ENCODE measurements at regions of chr10 and their contacts with region 1.

Region 1: DNA sequence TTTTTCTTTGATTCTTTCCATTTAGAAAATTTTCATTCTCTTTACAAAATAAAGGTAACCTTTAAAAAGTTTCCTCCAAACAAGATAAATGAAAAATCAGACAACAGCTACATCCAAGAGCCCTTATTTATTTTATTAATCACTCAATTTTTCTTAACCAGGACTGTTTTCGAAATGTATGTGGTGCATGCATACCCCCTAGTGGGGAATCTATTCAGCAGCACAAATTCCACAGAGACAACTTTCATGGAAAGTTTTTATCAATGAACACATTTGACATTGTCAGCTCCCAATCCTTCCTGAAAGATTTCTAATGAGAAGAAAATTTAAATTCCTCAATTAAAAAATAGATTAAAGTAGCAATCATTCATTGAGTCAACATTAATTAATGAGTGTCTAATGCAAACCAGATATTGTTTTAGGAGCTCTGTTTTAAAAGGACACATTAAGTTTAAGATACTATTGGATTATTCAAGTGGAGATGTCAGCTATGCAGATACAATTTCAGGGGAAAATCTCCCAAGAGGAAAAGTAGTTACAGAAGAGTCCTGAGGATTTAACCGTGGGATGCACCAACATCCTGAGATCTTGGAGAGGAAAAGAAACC is 5.2 kb upstream of the HTR7 start:
- DNase-seq: peak; percentile 47
- ATAC-seq: peak; percentile 30; the same call in 1 of the 2 replicates
- H3K4me3 ChIP-seq: no peak overlapping the region
- H3K27ac ChIP-seq: no peak overlapping the region
- H3K4me1 ChIP-seq: no peaks in the 10 kb centered on the region
- H3K27me3 ChIP-seq: peaks cover 21% of the 10 kb centered on the region
- CTCF ChIP-seq: peak; percentile 89
- POLR2A ChIP-seq: no peak
- RAD21 ChIP-seq: peak; percentile 83

Region 2: DNA sequence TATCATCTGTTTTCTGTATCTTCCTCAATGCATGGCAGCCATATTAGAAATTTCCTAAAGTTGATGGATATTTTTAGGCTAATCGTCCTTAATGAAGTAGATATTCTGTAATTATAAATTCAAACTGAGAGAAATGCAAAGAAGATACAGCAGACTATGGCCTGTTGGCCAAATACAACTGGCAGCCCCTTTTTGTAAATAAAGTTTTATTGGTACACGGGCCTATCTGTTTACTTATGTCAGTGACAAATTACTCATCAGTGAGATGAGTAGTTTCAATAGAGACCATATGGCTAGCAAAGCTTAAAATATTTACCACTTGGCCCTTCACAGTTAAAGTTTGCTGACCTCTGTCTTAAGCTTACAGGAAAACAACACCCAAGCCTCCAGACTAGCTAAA is 117.4 kb before region 1 on chr10:
- CTCF ChIA-PET with region 1: interaction called, 12 read pairs
- POLR2A ChIA-PET with region 1: no interaction called
- dilution Hi-C with region 1: no loop called
- in situ Hi-C with region 1: loop called (anchors 5 kb)
- intact Hi-C with region 1: no loop called
- DNase-seq: no peak
- ATAC-seq: no peak
- H3K4me3 ChIP-seq: no peak overlapping the region
- H3K27ac ChIP-seq: no peak overlapping the region
- H3K4me1 ChIP-seq: no peaks in the 10 kb centered on the region
- H3K27me3 ChIP-seq: no peaks in the 10 kb centered on the region
- CTCF ChIP-seq: no peak
- POLR2A ChIP-seq: no peak
- RAD21 ChIP-seq: no peak

Region 3: DNA sequence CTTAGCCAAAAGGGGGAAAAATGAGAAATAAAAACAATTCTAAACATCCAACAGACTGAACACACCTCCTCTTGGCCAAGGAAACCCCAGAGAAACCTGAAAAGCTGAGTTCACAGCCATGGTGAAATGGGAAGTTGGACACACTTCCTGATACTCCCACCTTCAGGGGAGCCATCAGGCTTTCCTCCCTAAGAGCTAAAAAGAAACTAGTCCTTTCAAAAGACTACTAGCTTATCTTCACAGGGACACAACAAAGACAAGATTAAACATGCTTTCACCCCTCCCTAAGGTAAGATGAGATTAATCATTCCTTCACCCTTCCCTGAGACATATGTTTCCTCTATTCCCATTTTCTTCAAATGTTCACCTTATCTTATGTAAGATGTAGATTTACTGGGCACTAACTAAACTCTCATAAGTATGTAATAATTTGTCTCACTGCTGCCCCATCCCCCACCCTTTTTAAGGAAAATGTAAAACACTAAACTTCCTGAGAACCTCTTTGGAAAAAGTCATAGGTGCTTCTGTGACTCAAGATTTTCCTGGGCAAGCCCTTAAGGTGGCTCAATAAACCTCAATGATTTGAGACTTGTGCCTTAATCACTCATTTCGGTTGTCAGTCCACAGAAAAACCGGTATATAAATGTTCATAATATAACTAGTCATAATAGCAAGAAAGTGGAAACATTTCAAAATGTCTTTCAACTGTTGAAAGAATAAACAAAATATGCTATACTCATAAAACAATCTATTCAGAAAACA is 45.7 kb before region 1 on chr10:
- CTCF ChIA-PET with region 1: no interaction called
- POLR2A ChIA-PET with region 1: no interaction called
- dilution Hi-C with region 1: no loop called
- in situ Hi-C with region 1: no loop called
- intact Hi-C with region 1: no loop called
- DNase-seq: no peak
- ATAC-seq: no peak
- H3K4me3 ChIP-seq: no peak overlapping the region
- H3K27ac ChIP-seq: no peak overlapping the region
- H3K4me1 ChIP-seq: no peaks in the 10 kb centered on the region
- H3K27me3 ChIP-seq: no peaks in the 10 kb centered on the region
- CTCF ChIP-seq: no peak
- POLR2A ChIP-seq: no peak
- RAD21 ChIP-seq: no peak

Region 4: DNA sequence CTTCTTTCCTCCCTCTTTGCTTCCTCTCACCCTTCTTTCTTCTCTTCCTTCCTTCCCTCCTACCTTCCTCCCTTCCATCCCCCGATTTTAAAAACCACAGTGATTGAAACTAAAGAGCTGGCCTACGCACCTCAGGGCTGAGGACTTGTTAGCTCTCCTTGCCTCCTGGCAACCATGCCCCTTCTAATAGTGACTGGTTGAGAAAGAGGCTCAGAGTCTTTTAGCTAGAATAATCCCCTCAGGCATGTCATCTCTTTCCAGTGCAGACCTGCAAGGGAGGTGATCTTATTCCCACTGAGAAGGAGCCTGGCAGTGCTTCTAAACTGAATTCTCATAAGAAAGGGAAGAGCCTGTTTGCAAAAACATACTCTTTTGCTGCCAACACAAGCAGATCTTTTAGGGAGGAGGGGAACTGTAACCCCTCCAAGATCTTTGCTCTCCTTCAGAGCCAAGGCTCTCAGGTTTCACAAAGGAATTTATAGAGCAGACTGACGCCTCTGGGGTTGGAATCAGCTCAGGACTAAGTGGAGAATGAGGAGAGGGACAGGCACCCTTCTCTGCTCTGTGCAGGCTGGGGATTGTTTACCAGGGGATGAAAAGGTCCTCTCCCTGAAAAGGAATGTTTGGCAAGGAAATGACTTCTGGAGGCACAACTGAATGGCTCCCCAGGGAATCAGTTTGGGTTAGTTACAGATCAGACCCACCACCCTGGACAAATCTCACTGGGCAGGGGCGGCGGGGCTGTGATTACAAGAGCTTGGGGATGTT is 67.2 kb after region 1 on chr10:
- CTCF ChIA-PET with region 1: no interaction called
- POLR2A ChIA-PET with region 1: no interaction called
- dilution Hi-C with region 1: no loop called
- in situ Hi-C with region 1: no loop called
- intact Hi-C with region 1: no loop called
- DNase-seq: peak; percentile 75
- ATAC-seq: peak; percentile 79
- H3K4me3 ChIP-seq: no peak overlapping the region
- H3K27ac ChIP-seq: peak overlapping the region; percentile 96
- H3K4me1 ChIP-seq: peaks cover 16% of the 10 kb centered on the region
- H3K27me3 ChIP-seq: no peaks in the 10 kb centered on the region
- CTCF ChIP-seq: no peak
- POLR2A ChIP-seq: peak; percentile 3; the same call in 1 of the 2 replicates
- RAD21 ChIP-seq: no peak

Region 5: GRCh38 chr10:90947030-90947940 is 84.3 kb after region 1 on chr10:
- CTCF ChIA-PET with region 1: no interaction called
- POLR2A ChIA-PET with region 1: no interaction called
- dilution Hi-C with region 1: no loop called
- in situ Hi-C with region 1: no loop called
- intact Hi-C with region 1: no loop called
- DNase-seq: peak; percentile 46
- ATAC-seq: peak; percentile 86
- H3K4me3 ChIP-seq: no peak overlapping the region
- H3K27ac ChIP-seq: no peak overlapping the region
- H3K4me1 ChIP-seq: peaks cover 6% of the 10 kb centered on the region
- H3K27me3 ChIP-seq: no peaks in the 10 kb centered on the region
- CTCF ChIP-seq: no peak
- POLR2A ChIP-seq: no peak
- RAD21 ChIP-seq: no peak